Activated naive CD4-positive, alpha-beta T cell treated with anti-CD3 and anti-CD28 coated beads for 36 hours (primary cell): ENCODE measurements at regions of chr10 and their contacts with region 1.

Region 1: GRCh38 chr10:15106352-15107013 is 9.3 kb downstream of the RPP38 start:
- DNase-seq: peak; percentile 85
- H3K4me3 Mint-ChIP-seq: no peak overlapping the region
- H3K27ac Mint-ChIP-seq: peak overlapping the region; percentile 39
- H3K4me1 Mint-ChIP-seq: peaks cover 12% of the 10 kb centered on the region
- H3K27me3 Mint-ChIP-seq: no peaks in the 10 kb centered on the region

Region 2: GRCh38 chr10:14995964-14996565 is 110.4 kb before region 1 on chr10:
- CTCF ChIA-PET with region 1: interaction called, 6 read pairs
- intact Hi-C with region 1: loop called (anchors 1 kb)
- DNase-seq: no peak
- H3K4me3 Mint-ChIP-seq: peak overlapping the region; percentile 13
- H3K27ac Mint-ChIP-seq: no peak overlapping the region
- H3K4me1 Mint-ChIP-seq: peaks cover 7% of the 10 kb centered on the region
- H3K27me3 Mint-ChIP-seq: peaks cover 3% of the 10 kb centered on the region

Region 3: DNA sequence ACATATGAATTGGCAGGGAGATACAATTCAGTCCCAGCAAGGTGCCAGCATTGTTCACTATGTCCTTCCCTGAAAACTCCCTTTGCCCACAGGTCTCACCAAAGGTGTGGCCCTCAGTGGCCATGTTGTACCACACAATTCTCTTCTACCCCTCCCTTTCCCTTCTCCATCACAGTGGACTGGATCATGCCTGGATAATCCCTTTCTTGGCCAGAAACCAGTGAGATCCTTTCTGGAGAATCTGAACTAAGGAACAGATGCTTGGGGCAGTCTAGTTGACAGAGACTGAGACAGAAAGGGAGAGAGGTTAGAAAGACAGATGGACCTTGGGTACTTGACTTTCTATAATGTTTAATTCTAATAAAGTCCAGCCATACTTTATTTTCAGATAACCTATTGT is 52.5 kb after region 1 on chr10:
- CTCF ChIA-PET with region 1: no interaction called
- intact Hi-C with region 1: no loop called
- DNase-seq: no peak
- H3K4me3 Mint-ChIP-seq: no peak overlapping the region
- H3K27ac Mint-ChIP-seq: no peak overlapping the region
- H3K4me1 Mint-ChIP-seq: peaks cover 40% of the 10 kb centered on the region
- H3K27me3 Mint-ChIP-seq: no peaks in the 10 kb centered on the region